ENCODE measurements at regions of chr4 and their contacts with region 1.

Region 1: GRCh38 chr4:109702950-109703663 is at the start of gene CASP6:
- DNase-seq: peak; percentile 88 to 92 (median 90)
- ATAC-seq: peak; percentile 92
- H3K4me3 ChIP-seq: peak within 1 kb of the TSS; percentile 44 to 66
- H3K27ac ChIP-seq: peak within 1 kb of the TSS; percentile 86 to 91 (median 88)
- H3K4me1 ChIP-seq: peaks cover 40% of the 10 kb centered on the region
- H3K27me3 ChIP-seq: no peaks in the 10 kb centered on the region
- CTCF ChIP-seq: peak; percentile 49 to 76 (median 68)
- POLR2A ChIP-seq: peak; percentile 35 to 74 (median 71)
- total RNA-seq, gene CASP6: 8.6 to 9.6 TPM

Region 2: DNA sequence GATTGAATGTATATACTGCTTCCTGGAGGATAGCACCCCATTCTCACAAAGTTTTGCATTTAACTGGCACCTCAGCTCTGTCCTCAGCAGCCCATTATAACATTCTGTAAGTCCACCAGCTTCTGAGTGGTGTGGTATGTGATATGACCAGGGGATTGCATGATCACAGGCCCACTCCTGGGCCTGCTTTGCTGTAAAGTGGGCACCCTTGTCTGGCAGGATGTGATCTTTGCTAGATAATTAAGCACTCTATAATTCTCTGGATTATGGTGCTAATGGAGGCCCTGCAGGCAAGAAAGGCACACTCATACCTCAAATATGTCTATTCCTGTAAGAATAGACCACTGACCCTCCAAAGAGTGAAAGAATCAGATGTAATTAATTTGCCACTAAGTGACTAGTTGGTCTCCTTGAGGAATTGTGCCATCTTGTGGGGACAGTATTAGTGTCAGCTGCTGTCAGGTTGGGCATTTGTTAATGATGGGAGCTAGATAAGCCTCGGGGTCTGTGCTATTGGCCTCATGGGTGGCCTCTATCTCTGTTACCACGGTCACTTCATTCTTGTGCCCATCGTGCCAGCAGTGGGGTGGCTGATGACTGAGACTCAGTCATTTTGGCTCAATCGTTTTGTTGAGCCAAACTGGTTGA is 100.9 kb after region 1 on chr4:
- intact Hi-C with region 1: loop called (anchors 10 kb)
- DNase-seq: peak; percentile 16 to 54 (median 44)
- ATAC-seq: peak; percentile 57
- H3K4me3 ChIP-seq: no peak overlapping the region
- H3K27ac ChIP-seq: no peak overlapping the region
- H3K4me1 ChIP-seq: peaks cover 18% of the 10 kb centered on the region
- H3K27me3 ChIP-seq: no peaks in the 10 kb centered on the region
- CTCF ChIP-seq: peak in 6 of 7 experiments; percentile 26 to 71 (median 54)
- POLR2A ChIP-seq: no peak

Region 3: GRCh38 chr4:110034026-110034393 is 330.9 kb after region 1 on chr4:
- intact Hi-C with region 1: no loop called
- DNase-seq: peak in 1 of 4 donors; percentile 30
- ATAC-seq: no peak
- H3K4me3 ChIP-seq: no peak overlapping the region
- H3K27ac ChIP-seq: no peak overlapping the region
- H3K4me1 ChIP-seq: no peaks in the 10 kb centered on the region
- H3K27me3 ChIP-seq: no peaks in the 10 kb centered on the region
- CTCF ChIP-seq: no peak
- POLR2A ChIP-seq: no peak

Measured in body of pancreas (tissue), 4 donors.